Dendritic cell treated with granulocyte-macrophage colony-stimulating factor and Interleukin-4, amounts not matched to agents 40 ng/mL and 50 ng/mL, for 4 days (primary cell): ENCODE measurements at regions of chr6 and their contacts with region 1.

Region 1: DNA sequence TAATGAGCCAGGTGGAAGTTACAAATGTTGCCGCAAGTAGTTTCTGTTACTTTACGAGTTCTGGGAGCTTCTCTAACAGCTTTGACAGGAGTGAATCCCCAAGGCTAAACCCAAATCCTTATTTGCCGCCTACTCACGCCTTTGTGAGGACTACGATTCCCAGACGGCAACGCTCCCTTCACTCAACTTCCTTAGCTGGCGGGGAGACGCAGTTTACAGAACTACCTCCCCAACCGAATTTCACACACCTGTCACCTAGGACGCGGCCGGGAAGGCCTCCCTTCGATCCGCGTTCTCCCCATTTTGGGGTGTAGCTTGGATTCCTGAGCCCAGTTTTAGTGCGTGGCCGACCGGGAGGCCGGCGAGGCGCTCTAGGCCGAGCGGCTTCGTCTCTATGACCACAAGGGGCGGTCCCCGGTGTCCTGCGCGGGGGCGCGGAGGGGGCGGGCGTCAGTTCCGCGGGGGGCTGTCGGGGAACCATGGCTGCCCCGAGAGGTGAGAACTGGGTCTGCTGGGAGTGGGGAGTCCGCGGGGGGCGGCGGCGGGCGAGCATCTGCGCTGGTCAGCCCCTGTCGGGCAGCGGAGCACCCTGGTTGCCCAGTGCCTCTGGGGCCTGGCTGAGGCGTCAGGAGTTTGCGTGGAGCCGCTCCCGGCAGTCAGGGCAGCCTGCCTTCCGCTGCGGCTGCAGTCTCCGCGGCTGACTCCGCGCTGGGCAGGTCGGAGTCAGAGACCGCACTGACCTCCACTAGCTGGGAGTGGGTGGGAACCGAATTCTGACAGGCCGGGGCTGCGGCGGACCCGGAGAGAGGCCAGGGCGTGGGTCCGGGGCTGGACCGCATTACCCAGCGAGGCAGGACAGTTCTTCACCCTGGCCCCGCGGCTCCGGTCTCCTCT is at the start of gene SLC35A1:
- H3K4me3 Mint-ChIP-seq: peak within 1 kb of the TSS; percentile 94
- H3K27ac Mint-ChIP-seq: peak within 1 kb of the TSS; percentile 99
- H3K4me1 Mint-ChIP-seq: peaks cover 13% of the 10 kb centered on the region
- H3K27me3 Mint-ChIP-seq: no peaks in the 10 kb centered on the region

Region 2: GRCh38 chr6:87154993-87155841 is 317.6 kb before region 1 on chr6 and contains the start of gene ZNF292:
- intact Hi-C with region 1: loop called (anchors 5 kb)
- H3K4me3 Mint-ChIP-seq: peak within 1 kb of the TSS; percentile 98
- H3K27ac Mint-ChIP-seq: peak within 1 kb of the TSS; percentile 97
- H3K4me1 Mint-ChIP-seq: peaks cover 42% of the 10 kb centered on the region
- H3K27me3 Mint-ChIP-seq: peaks cover 13% of the 10 kb centered on the region

Region 3: DNA sequence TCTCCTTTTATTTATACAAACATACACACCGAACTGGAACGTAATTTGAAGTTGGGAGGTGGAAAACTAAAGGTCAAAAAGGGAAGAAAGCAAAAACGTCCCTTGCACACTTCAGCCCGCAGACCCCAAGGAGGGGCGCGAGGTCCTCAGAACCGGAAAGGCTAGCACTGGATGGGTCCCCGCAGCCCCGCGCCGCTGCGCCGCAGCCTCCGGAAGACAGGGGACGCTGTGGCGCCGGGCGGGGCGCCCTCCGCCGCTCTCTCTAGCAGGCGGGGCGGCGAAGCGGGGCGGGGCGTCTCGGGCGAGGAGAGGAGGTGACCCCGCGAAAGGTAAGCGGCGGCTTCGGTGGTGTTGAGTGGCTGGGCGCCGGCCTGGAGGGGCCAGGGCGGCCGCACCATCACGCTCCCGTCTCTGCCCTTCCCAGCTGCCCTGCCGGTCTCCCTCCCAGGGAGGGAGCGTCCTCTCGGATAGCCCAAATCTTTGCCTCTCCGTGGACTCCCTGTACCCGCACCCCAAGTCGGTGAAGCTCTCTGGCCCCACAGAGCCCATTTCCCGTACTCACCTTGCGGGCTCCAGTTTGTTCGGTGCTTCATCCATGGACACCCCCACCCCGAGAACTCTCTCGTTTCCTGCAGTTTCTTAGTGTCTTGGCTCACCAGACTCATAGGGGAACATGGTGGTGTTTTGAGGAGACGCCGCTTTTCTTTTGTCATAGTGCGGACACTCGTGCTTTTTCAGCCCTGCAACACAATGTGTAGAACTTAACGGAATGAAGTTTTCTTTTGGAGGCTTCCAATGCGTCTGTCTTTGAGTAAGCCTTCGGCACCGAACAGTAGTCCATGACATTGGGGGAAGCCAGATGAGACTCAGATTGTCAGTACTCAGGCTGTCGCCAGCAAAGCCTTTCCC is 150.2 kb before region 1 on chr6 and contains the start of gene SMIM8:
- intact Hi-C with region 1: loop called (anchors 2 kb)
- H3K4me3 Mint-ChIP-seq: peak within 1 kb of the TSS; percentile 99
- H3K27ac Mint-ChIP-seq: peak within 1 kb of the TSS; percentile 90
- H3K4me1 Mint-ChIP-seq: peaks cover 13% of the 10 kb centered on the region
- H3K27me3 Mint-ChIP-seq: peaks cover 3% of the 10 kb centered on the region

Region 4: DNA sequence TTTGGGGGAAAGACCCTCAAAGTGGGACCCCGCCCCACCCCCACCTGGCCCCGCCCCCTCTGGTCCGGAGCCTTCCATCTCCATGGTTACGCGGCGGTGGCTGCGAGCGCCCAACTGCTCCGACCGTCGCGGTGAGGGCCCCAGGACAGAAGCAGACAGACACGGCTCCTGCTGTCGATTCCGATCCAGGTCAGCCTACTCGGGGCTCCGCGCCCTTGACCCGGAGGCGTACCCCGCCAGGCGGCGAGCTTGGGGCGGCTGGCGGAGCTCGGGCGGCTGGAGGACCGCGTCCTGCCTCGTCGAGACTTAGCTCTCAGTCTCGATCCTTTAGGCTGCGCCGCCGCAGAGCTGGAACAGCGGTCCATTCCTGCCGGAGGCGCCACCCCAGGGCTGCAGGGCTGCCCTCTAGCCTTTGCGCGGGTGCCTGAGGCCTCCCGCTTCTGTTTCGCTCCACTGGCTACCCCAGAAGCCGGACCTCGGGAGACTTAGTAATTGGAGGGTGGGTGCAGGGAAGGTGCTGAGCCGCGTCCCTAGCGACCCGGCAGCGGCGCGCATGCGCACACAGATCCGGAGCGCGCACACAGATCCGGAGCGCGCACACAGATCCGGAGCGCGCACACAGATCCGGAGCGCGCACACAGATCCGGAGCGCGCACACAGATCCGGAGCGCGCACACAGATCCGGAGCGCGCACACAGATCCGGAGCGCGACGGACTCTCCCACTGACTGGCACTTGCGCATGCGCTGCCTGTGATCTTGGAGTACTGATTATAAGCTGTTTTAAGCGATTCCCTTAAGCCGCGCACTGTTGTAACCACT is 64.7 kb before region 1 on chr6 and contains the start of gene CFAP206:
- intact Hi-C with region 1: loop called (anchors 5 kb)
- H3K4me3 Mint-ChIP-seq: peak within 1 kb of the TSS; percentile 87
- H3K27ac Mint-ChIP-seq: peak within 1 kb of the TSS; percentile 76
- H3K4me1 Mint-ChIP-seq: no peaks in the 10 kb centered on the region
- H3K27me3 Mint-ChIP-seq: peaks cover 11% of the 10 kb centered on the region

Region 5: GRCh38 chr6:87589693-87590549 is 117.1 kb after region 1 on chr6 and contains the starts of genes ORC3 and RARS2:
- intact Hi-C with region 1: loop called (anchors 5 kb)
- H3K4me3 Mint-ChIP-seq: peak within 1 kb of the TSS; percentile 86
- H3K27ac Mint-ChIP-seq: peak within 1 kb of the TSS; percentile 90
- H3K4me1 Mint-ChIP-seq: peaks cover 37% of the 10 kb centered on the region
- H3K27me3 Mint-ChIP-seq: no peaks in the 10 kb centered on the region

Region 6: DNA sequence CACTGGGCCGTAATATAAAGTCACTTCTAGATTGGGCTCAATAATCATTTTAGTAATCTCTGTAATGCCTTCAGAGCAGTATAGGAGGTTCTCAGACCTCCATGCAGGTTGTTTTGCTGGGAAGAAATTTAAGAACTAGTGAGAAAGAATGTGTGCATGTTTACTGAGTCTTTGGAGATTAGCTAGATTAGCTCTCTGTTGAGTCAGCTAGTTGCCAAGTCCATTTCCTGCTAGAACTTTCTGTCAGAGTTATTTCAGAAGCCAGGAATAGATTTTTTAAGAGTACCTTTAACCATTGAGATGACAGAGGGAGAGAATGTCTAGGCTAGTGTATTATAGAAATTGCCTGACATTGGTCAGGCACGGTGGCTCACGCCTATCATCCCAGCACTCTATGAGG is 150.5 kb after region 1 on chr6:
- intact Hi-C with region 1: no loop called
- H3K4me3 Mint-ChIP-seq: no peak overlapping the region
- H3K27ac Mint-ChIP-seq: no peak overlapping the region
- H3K4me1 Mint-ChIP-seq: peaks cover 7% of the 10 kb centered on the region
- H3K27me3 Mint-ChIP-seq: no peaks in the 10 kb centered on the region

Region 7: DNA sequence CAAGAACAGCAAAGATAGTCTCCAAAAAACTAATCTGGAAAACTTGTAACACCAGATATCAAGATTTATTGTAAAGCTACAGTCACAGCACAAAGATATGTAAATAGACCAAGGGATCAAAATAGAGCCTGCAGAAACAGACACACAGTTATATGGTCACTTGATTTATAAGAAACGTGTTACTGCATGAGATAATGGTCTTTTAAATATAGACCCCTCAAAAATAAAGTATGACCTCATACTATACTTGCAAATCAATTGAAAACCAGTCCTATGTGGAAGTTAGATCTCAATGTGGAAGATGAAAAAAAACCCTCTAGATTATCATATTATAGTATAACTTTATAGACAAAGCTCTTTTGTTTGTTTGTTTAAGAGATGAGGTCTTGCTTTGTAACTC is 940.7 kb after region 1 on chr6:
- intact Hi-C with region 1: no loop called
- H3K4me3 Mint-ChIP-seq: no peak overlapping the region
- H3K27ac Mint-ChIP-seq: no peak overlapping the region
- H3K4me1 Mint-ChIP-seq: no peaks in the 10 kb centered on the region
- H3K27me3 Mint-ChIP-seq: no peaks in the 10 kb centered on the region

Region 8: DNA sequence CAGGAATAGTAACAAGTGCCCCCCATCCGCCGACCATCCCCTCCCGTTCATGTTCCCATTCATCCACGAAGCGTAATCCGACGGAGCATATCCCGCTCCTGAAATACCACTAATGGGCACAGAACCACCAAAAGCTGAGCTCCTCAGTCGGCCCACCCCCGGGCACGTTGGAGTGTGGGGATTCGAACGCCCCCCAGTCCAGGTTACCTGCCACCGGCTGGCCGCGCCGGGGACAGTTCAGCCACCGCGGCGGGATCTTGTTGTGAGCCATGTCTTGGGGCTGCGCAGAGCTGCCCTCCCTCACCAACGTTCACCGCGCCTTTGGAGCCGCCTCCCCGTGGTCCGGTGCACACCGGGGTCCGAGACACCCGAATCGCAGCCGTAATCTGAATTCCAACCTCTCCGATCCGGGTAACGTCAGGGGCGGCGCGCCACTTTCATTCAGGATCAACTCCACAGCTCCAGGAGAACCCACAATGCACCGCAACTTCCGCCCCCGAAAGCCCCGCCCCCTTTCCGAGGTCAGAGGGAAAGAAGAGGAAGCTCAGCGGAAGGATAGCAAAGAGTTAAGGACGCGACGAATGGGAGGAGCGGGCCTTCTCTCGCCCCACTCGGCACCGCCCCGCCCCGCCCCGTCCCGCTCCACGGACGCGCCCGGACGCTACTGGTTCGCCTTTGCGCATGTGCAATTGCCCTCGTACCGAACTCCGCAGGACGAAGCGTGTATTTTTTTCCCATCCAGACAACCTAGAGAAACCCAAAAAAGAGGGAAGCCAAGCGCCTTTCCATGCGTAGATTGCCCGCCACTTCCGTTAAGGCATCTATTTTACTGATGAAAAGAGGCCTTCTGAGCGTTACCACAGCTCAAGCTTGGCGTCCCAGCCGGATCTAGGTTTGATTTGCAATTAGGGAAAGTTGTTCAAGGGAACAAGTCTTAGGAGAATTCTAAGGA is 1490.6 kb after region 1 on chr6 and contains the start of gene RNGTT:
- intact Hi-C with region 1: loop called (anchors 10 kb)
- H3K4me3 Mint-ChIP-seq: peak within 1 kb of the TSS; percentile 96
- H3K27ac Mint-ChIP-seq: peak within 1 kb of the TSS; percentile 97
- H3K4me1 Mint-ChIP-seq: peaks cover 24% of the 10 kb centered on the region
- H3K27me3 Mint-ChIP-seq: peaks cover 4% of the 10 kb centered on the region